Posterior vena cava (tissue), 2 donors: ENCODE measurements at regions of chr7 and their contacts with region 1.

Region 1: DNA sequence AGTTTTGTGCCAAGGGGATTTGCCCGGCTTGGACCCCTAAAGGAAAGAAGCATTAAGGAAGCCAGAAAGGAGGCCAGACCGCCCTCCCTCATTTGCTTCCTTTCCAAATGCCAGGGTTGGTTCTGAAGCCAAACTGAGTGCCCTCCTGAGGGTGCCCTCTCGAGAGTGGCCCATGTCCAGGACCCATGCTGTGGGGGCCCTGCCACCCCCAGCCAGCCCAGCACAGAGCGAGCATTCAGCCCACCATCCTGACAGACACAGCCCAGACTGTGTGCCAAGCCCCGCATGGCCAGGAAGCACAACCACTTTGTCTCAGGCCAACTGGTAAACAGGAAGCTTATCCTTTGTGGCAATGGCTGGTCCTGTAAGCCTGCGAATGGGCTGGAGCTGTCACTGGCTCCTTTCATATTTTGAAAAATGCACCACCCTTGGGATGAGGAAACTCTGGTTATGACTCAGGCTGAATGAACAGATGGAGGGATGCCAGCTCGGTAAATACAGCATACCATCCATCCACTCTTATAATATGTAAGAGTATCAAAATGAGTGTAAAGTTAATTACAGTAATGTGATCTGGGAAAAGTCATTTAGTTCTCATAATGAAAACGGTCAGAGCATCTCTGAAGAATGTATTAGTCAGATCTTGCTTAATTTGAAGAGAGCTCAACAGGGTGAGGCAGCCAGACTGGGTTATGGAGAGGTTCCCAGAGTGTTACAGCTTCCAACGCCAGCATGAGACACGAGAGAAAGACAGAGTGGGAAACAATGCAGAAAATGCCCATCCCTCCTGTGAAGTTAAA is 65.0 kb downstream of the STK17A start:
- DNase-seq: peak; percentile 86

Region 2: GRCh38 chr7:43869867-43870240 is 222.0 kb after region 1 on chr7:
- intact Hi-C with region 1: loop called in 1 of 2 experiments (anchors 10 kb)
- DNase-seq: no peak